ENCODE measurements at regions of chr10 and their contacts with region 1.

Region 1: DNA sequence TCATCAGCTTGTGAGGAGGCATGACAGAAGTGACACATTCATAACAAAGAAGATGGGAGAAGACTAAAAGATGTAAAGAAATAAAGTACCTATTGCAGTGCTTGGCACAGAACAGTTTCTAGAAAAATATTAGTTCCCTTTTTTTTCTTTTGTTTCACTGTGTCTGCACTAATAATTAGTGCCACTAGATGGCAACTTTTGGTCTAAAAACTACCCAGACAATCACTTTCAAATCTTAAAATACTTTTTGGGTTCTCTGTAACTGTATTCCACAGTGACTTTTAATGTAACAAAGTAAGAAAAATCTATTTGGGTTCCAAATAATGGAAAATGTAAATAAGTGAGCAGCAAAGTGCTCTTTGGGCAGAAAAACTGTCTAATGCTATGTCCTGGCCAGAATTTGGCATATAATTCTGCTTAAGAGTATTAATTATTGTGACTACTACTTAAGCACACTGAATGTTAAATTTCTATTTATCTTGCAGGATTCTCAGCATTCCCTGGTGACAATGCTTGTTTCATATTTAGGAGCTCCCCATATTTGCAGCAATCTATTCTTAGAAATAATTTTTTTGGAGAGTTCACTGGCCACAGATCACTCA is 134.8 kb upstream of the KIF5B start:
- H3K4me3 ChIP-seq: no peak overlapping the region
- H3K27ac ChIP-seq: no peak overlapping the region
- H3K4me1 ChIP-seq: no peaks in the 10 kb centered on the region
- CTCF ChIP-seq: no peak

Region 2: GRCh38 chr10:32205666-32206065 is 14.7 kb after region 1 on chr10:
- CTCF ChIA-PET with region 1: interaction called, 15 read pairs
- POLR2A ChIA-PET with region 1: no interaction called
- H3K4me3 ChIP-seq: no peak overlapping the region
- H3K27ac ChIP-seq: no peak overlapping the region
- H3K4me1 ChIP-seq: no peaks in the 10 kb centered on the region
- CTCF ChIP-seq: no peak

Region 3: GRCh38 chr10:32263300-32263699 is 72.3 kb after region 1 on chr10:
- CTCF ChIA-PET with region 1: no interaction called
- POLR2A ChIA-PET with region 1: no interaction called
- H3K4me3 ChIP-seq: no peak overlapping the region
- H3K27ac ChIP-seq: no peak overlapping the region
- H3K4me1 ChIP-seq: no peaks in the 10 kb centered on the region
- CTCF ChIP-seq: no peak

Region 4: GRCh38 chr10:32367793-32368453 is 176.9 kb after region 1 on chr10:
- CTCF ChIA-PET with region 1: interaction called, 17 read pairs
- POLR2A ChIA-PET with region 1: no interaction called
- H3K4me3 ChIP-seq: no peak overlapping the region
- H3K27ac ChIP-seq: no peak overlapping the region
- H3K4me1 ChIP-seq: no peaks in the 10 kb centered on the region
- CTCF ChIP-seq: peak; percentile 52

Measured in HEK293 (cell line).